Caco-2 (cell line): ENCODE measurements at regions of chr2 and their contacts with region 1.

Region 1: DNA sequence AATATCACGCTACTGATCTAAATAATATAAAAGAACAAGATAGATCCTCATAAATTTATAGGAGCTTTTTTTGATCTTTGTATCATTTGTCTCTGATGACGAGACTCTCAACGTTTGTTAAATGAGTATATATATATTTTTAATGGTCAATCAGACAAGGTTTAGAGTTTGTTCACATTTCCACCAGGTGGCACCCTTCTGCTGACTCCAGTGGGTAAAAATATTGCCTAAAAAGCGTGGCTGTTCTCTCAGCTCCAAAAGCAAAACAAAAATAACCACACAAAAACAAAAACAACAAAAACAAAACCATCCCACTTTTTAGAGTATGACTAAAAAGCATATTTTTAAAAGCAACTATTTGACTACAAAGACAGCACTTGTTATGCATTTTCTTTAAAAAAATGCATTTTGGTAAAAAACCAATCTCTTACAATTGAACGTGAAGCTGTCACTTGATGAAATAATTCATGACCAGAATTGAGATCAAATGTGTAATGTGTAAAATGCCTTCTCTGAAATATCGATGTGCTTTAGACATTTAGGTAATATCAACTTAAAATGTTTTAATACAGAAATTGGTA is 723.2 kb downstream of the DPP10 start:
- DNase-seq: peak in 1 of 2 experiments; percentile 34
- H3K4me3 ChIP-seq: no peak overlapping the region
- H3K4me3 Mint-ChIP-seq: no peak overlapping the region
- H3K27ac Mint-ChIP-seq: no peak overlapping the region
- H3K4me1 ChIP-seq: no peaks in the 10 kb centered on the region
- H3K4me1 Mint-ChIP-seq: no peaks in the 10 kb centered on the region
- H3K27me3 ChIP-seq: no peaks in the 10 kb centered on the region
- H3K27me3 Mint-ChIP-seq: peaks cover 3% of the 10 kb centered on the region
- CTCF ChIP-seq: peak; percentile 58 to 66

Region 2: DNA sequence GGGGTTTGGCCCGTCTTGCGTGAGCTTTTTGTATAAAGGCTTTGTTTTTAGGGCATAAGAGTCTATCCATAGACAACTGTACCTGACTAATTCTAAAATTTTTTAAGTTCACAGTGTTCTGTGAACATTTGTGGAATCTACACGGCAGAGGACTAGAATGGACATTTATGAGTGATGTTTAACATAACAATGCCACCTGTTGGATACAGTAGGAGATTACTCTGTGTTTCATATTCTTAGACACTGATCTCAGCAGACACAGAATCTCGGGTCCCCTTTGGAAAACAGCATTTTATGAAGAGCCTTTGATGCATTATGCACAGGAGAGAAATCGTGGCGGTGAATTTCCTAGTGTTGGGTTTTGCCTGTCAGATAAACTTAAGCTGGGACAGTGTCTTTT is 29.0 kb after region 1 on chr2:
- CTCF ChIA-PET with region 1: no interaction called
- POLR2A ChIA-PET with region 1: no interaction called
- intact Hi-C with region 1: loop called (anchors 1 kb)
- DNase-seq: no peak
- H3K4me3 ChIP-seq: no peak overlapping the region
- H3K4me3 Mint-ChIP-seq: no peak overlapping the region
- H3K27ac Mint-ChIP-seq: no peak overlapping the region
- H3K4me1 ChIP-seq: no peaks in the 10 kb centered on the region
- H3K4me1 Mint-ChIP-seq: no peaks in the 10 kb centered on the region
- H3K27me3 ChIP-seq: no peaks in the 10 kb centered on the region
- H3K27me3 Mint-ChIP-seq: peaks cover 17% of the 10 kb centered on the region
- CTCF ChIP-seq: peak in 1 of 2 experiments; percentile 24

Region 3: DNA sequence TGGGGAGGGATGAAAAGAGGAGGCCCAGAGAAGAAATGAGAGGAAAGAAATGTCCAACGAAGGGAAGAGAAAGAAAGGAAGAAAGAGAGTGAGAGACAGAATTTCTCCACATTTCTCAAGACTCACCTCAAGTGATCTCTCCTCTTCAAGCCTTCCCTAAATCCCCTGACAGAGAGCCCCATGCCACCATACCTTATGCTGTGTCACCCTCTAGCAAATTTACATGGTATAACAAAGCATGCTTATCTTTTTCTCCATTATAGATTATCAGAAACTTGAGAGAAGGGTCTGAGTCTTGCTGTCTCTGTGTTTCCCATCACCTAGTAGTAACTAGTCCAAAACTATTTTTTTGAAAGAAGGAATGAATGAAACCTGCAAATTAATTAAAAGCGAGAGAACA is 485.2 kb after region 1 on chr2:
- CTCF ChIA-PET with region 1: no interaction called
- POLR2A ChIA-PET with region 1: no interaction called
- intact Hi-C with region 1: loop called (anchors 1 kb)
- DNase-seq: no peak
- H3K4me3 ChIP-seq: no peak overlapping the region
- H3K4me3 Mint-ChIP-seq: no peak overlapping the region
- H3K27ac Mint-ChIP-seq: no peak overlapping the region
- H3K4me1 ChIP-seq: no peaks in the 10 kb centered on the region
- H3K4me1 Mint-ChIP-seq: no peaks in the 10 kb centered on the region
- H3K27me3 ChIP-seq: no peaks in the 10 kb centered on the region
- H3K27me3 Mint-ChIP-seq: no peaks in the 10 kb centered on the region
- CTCF ChIP-seq: no peak